ENCODE measurements at regions of chr4 and their contacts with region 1.

Region 1: GRCh38 chr4:105679186-105679585 is 29.3 kb downstream of the INTS12 start:
- DNase-seq: peak in 1 of 2 donors; percentile 1
- H3K4me3 ChIP-seq: no peak overlapping the region
- H3K27ac ChIP-seq: peak overlapping the region in 1 of 3 donors; percentile 42
- H3K4me1 ChIP-seq: peaks cover 23 to 38% of the 10 kb centered on the region in 2 donors
- H3K27me3 ChIP-seq: no peaks in the 10 kb centered on the region
- CTCF ChIP-seq: no peak
- POLR2A ChIP-seq: no peak

Region 2: DNA sequence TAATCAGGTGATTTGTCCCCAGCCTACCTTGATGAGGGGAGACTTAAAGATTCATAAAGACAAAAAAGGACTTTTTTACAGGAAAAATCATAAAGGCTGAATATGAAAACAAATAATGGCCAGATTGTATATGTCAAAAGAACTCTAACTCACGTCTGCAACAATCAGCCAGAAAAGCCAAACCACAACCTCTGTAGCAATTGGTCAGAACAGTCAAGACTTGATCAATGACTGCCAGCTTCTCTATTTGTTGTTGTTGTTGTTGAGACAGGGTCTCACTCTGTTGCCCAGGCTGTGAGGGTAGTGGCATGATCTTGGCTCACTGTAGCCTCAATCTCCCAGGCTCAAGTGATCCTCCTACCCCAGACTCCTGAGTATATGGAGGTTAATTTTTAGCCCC is 169.5 kb before region 1 on chr4:
- intact Hi-C with region 1: loop called (anchors 10 kb)
- DNase-seq: no peak
- H3K4me3 ChIP-seq: no peak overlapping the region
- H3K27ac ChIP-seq: no peak overlapping the region
- H3K4me1 ChIP-seq: peaks cover 0 to 12% of the 10 kb centered on the region in 2 donors
- H3K27me3 ChIP-seq: no peaks in the 10 kb centered on the region
- CTCF ChIP-seq: no peak
- POLR2A ChIP-seq: no peak